Endothelial cell of umbilical vein (primary cell): ENCODE measurements at regions of chr4 and their contacts with region 1.

Region 1: DNA sequence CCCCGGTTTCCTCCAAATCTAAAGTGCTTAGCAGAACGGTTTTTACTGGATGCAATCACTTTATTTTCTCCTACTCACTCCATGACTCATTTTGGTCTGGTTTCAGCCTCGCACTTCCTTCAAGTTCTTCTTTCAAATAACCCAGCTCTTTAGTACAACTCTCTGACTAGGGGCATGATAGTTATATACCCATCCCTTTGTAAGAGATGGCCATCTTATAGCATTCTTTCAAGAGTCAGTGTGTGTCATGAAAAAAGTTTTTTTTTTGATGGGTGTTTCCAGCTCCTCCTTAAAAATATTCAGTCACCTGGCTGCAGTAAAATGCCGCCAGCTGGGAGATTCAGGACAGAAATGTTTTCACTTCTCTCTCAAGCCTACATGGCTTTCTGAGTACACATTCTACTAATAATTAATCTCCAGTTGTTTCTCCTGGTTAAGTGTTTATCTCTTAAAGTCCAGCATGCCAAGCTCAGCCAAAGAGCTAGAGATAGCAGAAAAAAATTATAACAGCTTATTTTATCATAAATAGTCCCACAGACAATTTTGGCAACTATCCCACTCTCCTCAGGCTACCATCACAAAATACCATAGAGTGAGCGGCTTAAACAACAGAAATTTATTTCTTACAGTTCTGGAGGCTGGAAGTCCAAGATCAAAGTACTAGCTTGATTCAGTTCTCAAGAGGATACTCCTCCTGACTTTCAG is 139.3 kb downstream of the GASK1B start:
- DNase-seq: peak; percentile 96
- H3K4me3 ChIP-seq: peak overlapping the region in 1 of 3 experiments; percentile 11
- H3K27ac ChIP-seq: peak overlapping the region; percentile 85
- H3K4me1 ChIP-seq: peaks cover 29% of the 10 kb centered on the region
- H3K27me3 ChIP-seq: no peaks in the 10 kb centered on the region
- CTCF ChIP-seq: no peak
- POLR2A ChIP-seq: no peak

Region 2: DNA sequence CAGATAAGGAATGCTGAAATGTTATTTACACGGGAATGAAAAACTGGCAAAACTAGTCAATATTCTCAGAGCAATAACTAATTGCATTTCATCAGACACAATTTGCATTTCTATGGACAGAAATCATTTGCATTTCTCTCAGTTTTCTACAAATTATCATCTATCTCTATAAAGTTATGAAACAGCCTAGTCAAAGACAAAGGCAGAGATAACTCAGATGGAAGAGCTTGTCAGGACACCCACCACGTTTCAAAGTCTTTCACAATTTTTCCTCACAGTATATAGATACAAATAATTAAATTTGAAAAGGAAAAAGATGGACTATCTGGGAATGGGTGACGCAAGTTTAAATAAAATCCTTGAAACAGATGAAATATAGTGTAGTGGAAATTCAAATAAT is 91.6 kb before region 1 on chr4:
- CTCF ChIA-PET with region 1: no interaction called
- POLR2A ChIA-PET with region 1: no interaction called
- dilution Hi-C with region 1: no loop called
- intact Hi-C with region 1: no loop called
- DNase-seq: no peak
- H3K4me3 ChIP-seq: no peak overlapping the region
- H3K27ac ChIP-seq: no peak overlapping the region
- H3K4me1 ChIP-seq: no peaks in the 10 kb centered on the region
- H3K27me3 ChIP-seq: no peaks in the 10 kb centered on the region
- CTCF ChIP-seq: no peak
- POLR2A ChIP-seq: no peak

Region 3: GRCh38 chr4:158006990-158007389 is 26.6 kb before region 1 on chr4:
- CTCF ChIA-PET with region 1: interaction called, 8 read pairs
- POLR2A ChIA-PET with region 1: interaction called, 3 read pairs
- dilution Hi-C with region 1: no loop called
- intact Hi-C with region 1: loop called (anchors 1 kb)
- DNase-seq: peak; percentile 100
- H3K4me3 ChIP-seq: no peak overlapping the region
- H3K27ac ChIP-seq: peak overlapping the region; percentile 75
- H3K4me1 ChIP-seq: peaks cover 36% of the 10 kb centered on the region
- H3K27me3 ChIP-seq: no peaks in the 10 kb centered on the region
- CTCF ChIP-seq: no peak
- POLR2A ChIP-seq: no peak

Region 4: DNA sequence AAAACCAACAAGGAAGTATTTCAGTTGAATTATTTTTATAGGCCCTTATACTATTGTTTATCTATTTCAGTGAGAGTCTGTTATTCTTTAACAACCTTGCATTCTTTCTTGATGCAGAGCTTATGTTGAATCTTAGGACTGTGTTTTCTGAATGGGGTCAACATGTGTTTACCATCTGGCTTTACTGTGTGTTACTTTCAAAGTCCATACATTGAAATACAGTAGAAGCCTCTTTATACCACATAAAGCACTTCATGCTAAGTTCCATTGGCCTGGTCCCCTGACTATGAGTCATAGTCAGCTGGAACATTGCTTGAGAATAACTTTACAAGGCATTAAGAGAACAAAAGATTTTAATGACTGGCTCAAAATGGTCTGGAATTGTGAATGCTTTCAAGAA is 13.4 kb before region 1 on chr4:
- CTCF ChIA-PET with region 1: interaction called, 8 read pairs
- POLR2A ChIA-PET with region 1: interaction called, 3 read pairs
- dilution Hi-C with region 1: no loop called
- intact Hi-C with region 1: loop called (anchors 1 kb)
- DNase-seq: peak; percentile 96
- H3K4me3 ChIP-seq: peak overlapping the region in 1 of 3 experiments; percentile 30
- H3K27ac ChIP-seq: peak overlapping the region; percentile 95
- H3K4me1 ChIP-seq: peaks cover 59% of the 10 kb centered on the region
- H3K27me3 ChIP-seq: no peaks in the 10 kb centered on the region
- CTCF ChIP-seq: no peak
- POLR2A ChIP-seq: no peak